GM10248 (cell line): ENCODE measurements at regions of chr1 and their contacts with region 1.

Region 1: GRCh38 chr1:169680377-169681019 is 30.9 kb downstream of the SELL start:
- DNase-seq: peak; percentile 38
- CTCF ChIP-seq: no peak

Region 2: DNA sequence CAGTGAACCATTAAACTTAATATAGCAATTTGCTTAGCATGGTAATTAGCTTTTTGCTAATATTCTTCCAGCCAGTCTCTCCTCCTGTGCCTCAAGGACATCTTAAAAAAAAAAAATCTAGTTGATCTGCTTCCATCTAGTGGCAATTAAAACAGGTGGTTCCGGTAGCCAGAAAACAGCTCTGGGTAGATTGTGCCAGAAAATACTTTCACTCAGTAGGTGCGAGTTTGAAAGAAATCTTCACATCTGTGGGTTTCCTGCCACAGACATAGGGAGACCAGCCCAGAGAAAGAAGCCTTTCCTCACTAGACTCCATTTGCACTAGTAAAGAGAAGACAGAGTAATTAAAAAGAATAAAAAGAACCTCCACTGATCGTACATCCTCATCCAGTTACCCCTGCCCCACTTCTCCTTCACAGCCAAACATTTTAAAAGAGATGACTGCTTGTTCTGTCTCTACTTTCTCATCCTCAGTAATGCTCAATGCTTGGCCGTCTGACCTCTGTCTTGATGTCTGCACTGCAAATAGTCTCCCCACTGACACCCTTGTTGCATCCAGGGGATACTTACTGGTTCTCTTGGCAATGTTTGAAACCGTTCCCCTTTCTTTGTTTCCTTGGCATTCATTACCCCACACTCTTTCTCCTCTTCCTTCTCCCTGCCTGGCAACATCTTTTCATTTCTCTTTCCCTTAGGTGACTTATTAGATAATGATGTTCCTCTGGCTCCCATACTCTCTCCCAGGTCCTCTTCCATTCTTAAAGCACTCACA is 14.0 kb after region 1 on chr1:
- CTCF ChIA-PET with region 1: interaction called, 19 read pairs
- POLR2A ChIA-PET with region 1: no interaction called
- DNase-seq: no peak
- CTCF ChIP-seq: peak; percentile 18

Region 3: DNA sequence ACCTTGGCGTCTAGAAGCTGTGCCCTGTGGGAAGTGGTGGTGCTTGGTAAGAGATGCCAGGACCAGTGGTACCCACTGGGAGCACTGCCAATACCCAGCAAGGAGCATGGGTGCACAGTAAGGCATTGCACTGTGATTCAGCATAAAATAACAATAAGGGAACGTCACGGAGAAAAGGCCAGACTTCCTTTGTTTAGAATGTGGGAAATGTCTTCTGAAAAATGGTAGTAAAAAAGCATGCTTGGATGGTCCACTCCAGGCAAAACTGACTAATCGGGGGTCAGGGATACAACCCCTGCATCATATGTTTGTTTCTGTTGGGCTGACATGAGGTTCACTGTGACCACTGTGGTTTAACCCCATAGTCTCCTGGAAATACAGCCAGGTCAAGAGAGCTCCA is 99.5 kb after region 1 on chr1:
- CTCF ChIA-PET with region 1: no interaction called
- POLR2A ChIA-PET with region 1: no interaction called
- DNase-seq: no peak
- CTCF ChIP-seq: no peak

Region 4: GRCh38 chr1:169858467-169858866 is 178.0 kb after region 1 on chr1:
- CTCF ChIA-PET with region 1: no interaction called
- POLR2A ChIA-PET with region 1: no interaction called
- DNase-seq: no peak
- CTCF ChIP-seq: no peak